Vagina (tissue), 2 donors: ENCODE measurements at regions of chr1 and their contacts with region 1.

Region 1: GRCh38 chr1:6646499-6647148 is 22.0 kb downstream of the THAP3 start:
- DNase-seq: no peak
- H3K4me3 ChIP-seq: no peak overlapping the region
- H3K27ac ChIP-seq: no peak overlapping the region
- H3K4me1 ChIP-seq: no peaks in the 10 kb centered on the region
- H3K27me3 ChIP-seq: no peaks in the 10 kb centered on the region
- CTCF ChIP-seq: peak; percentile 45 to 74 (median 51)
- POLR2A ChIP-seq: no peak

Region 2: DNA sequence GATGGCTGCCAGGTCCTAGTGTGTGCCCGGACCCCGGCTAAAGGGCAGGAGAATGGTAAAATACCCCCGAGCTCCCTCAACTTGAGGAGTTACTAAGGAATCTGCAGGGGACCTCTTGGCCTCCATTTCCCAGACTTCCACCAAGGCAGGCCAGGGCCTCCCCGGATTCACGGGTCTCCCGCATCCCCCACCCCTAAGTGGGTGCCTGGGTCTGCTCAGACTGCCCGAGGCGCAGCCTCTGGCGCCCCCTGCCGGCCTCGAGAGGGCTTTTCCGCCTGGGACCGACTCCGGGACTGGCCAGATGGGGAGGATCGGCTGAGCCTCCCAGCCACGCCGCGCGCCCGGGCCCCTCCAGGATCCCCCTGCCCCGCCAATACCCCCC is 156.8 kb before region 1 on chr1:
- intact Hi-C with region 1: loop called (anchors 10 kb)
- DNase-seq: no peak
- H3K4me3 ChIP-seq: peak overlapping the region; percentile 52 to 58
- H3K27ac ChIP-seq: peak overlapping the region; percentile 90
- H3K4me1 ChIP-seq: peaks cover 58% of the 10 kb centered on the region
- H3K27me3 ChIP-seq: no peaks in the 10 kb centered on the region
- CTCF ChIP-seq: peak; percentile 60 to 67 (median 63)
- POLR2A ChIP-seq: no peak

Region 3: GRCh38 chr1:6554907-6555778 is 91.5 kb before region 1 on chr1 and contains the start of gene TAS1R1:
- intact Hi-C with region 1: loop called (anchors 5 kb)
- DNase-seq: no peak
- H3K4me3 ChIP-seq: peak within 1 kb of the TSS; percentile 100
- H3K27ac ChIP-seq: peak within 1 kb of the TSS; percentile 73
- H3K4me1 ChIP-seq: peaks cover 24% of the 10 kb centered on the region
- H3K27me3 ChIP-seq: no peaks in the 10 kb centered on the region
- CTCF ChIP-seq: no peak
- POLR2A ChIP-seq: no peak
- total RNA-seq, gene TAS1R1: not detected